Activated T-helper 1 cell treated with anti-CD3 and anti-CD28 coated beads, Interleukin-12 subunit alpha, Interleukin-12 subunit beta, Interleukin-2, Interleukin-4 antibody, amounts not matched to agents 30 ng/mL and 10 ng/mL and 1 ng/mL, durations not matched to agents 14 hours and 24 hours and 36 hours (primary cell): ENCODE measurements at regions of chr11 and their contacts with region 1.

Region 1: GRCh38 chr11:63681321-63682049 is at the start of gene RTN3:
- DNase-seq: peak; percentile 100
- H3K4me3 Mint-ChIP-seq: peak within 1 kb of the TSS; percentile 91
- H3K27ac Mint-ChIP-seq: peak within 1 kb of the TSS; percentile 91
- H3K4me1 Mint-ChIP-seq: peaks cover 32% of the 10 kb centered on the region
- H3K27me3 Mint-ChIP-seq: peaks cover 11% of the 10 kb centered on the region
- total RNA-seq, gene RTN3: 52.1 and 54.7 TPM in 2 replicates

Region 2: DNA sequence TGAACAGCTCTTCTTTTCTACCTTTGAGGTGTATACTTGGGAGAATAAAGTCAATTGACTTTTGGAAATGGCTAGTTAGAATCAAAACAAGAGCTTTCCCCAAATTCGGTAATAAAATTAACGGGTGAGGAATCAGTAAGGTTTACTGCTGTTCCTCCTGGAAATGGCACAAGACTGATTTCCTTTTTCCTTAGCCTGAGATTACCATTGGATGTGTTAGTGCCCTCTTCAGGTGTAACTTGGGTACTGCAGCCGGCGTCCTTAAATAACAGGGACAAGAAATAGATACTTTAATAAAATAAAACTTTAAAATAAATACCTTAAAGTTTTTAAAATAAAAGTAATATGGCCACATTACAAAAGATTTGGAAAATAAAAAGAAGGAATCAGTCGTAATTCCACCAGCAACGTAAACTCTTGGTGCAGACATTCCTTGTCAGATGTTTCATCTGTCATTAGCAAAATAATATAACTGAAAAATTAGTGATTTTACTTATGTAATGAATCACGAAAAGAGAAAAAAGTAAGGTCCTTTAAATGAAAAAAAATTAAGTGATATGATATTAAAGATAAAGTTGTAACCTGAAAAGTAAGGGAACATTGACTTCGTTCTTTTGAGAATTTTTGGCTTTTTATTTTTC is 57.4 kb after region 1 on chr11:
- intact Hi-C with region 1: loop called (anchors 1 kb)
- DNase-seq: peak; percentile 26
- H3K4me3 Mint-ChIP-seq: no peak overlapping the region
- H3K27ac Mint-ChIP-seq: no peak overlapping the region
- H3K4me1 Mint-ChIP-seq: peaks cover 5% of the 10 kb centered on the region
- H3K27me3 Mint-ChIP-seq: no peaks in the 10 kb centered on the region

Region 3: GRCh38 chr11:63768237-63769043 is 87.0 kb after region 1 on chr11 and contains the start of gene ZFTA:
- intact Hi-C with region 1: loop called (anchors 1 kb)
- DNase-seq: peak; percentile 45
- H3K4me3 Mint-ChIP-seq: peak within 1 kb of the TSS; percentile 87
- H3K27ac Mint-ChIP-seq: peak within 1 kb of the TSS; percentile 35
- H3K4me1 Mint-ChIP-seq: peaks cover 14% of the 10 kb centered on the region
- H3K27me3 Mint-ChIP-seq: peaks cover 33% of the 10 kb centered on the region
- total RNA-seq, gene ZFTA: 3.8 and 5.3 TPM in 2 replicates

Region 4: DNA sequence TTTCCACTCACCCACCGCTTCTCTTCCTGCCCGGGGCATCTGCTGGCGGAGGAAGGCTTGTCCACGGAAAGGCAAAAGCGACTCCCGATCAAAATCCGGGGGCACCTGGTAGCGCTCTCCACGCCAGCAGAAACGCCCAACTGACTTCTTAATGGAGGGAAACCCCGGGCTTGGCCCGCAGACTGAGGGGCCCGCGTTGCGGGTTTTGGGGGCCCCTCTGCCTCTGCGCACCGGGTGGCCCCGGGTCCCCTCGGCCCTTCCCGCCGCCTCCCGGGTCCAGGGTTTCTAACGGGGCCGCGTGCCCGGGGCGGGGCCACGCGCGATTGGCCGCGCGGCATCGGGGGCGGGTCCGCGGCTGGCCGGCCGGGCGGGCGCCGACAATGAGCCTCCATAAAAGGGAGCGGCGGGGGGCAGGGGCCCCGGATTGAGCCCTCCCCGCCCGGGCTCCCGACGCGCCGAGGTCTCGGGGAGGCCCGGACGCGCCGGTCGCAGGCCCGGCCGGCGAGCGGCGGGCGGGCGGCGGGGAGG is 131.6 kb after region 1 on chr11 and contains the start of gene SPINDOC:
- intact Hi-C with region 1: loop called (anchors 2 kb)
- DNase-seq: peak; percentile 78
- H3K4me3 Mint-ChIP-seq: peak within 1 kb of the TSS; percentile 88
- H3K27ac Mint-ChIP-seq: peak within 1 kb of the TSS; percentile 55
- H3K4me1 Mint-ChIP-seq: peaks cover 34% of the 10 kb centered on the region
- H3K27me3 Mint-ChIP-seq: no peaks in the 10 kb centered on the region
- total RNA-seq, gene SPINDOC: 60.0 and 64.3 TPM in 2 replicates

Region 5: DNA sequence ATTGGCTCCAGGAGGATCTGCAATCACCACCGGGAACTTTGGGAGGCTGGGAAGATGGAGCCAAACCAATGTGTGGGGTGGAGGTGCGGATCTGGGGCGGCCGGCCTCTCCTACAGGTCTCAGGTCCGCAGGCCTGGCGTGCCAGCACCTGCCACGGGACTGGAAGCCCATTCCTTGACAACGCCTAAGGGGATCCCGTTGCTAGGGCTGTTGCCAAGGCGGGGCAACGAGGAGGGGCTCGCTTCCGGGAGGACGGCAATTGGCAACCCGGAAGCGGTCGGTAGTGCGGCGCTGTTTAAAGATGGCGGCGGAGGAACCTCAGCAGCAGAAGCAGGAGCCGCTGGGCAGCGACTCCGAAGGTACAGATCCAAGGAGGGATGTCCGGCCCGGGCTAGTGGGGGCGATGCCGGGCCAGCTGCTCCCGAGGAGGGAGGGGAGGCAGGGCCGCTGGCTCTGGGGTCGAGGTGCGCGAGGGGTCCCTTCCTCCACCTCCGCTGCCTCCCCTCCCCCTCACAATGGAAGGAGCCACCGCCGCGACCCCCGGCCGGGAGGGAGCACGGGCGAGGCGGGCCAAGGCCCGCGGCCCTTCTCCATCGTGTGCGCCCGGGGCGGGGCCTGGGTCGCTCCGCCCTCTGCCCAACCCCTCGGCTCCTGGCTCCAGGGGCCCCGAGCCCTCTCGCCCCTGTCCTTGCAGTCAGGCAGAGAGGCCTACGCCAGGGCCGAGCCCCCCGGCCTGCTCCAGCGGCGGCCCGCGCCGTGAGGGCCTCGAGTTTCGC is 304.9 kb after region 1 on chr11 and contains the start of gene OTUB1:
- intact Hi-C with region 1: loop called (anchors 5 kb)
- DNase-seq: peak; percentile 86
- H3K4me3 Mint-ChIP-seq: peak within 1 kb of the TSS; percentile 97
- H3K27ac Mint-ChIP-seq: peak within 1 kb of the TSS; percentile 96
- H3K4me1 Mint-ChIP-seq: peaks cover 32% of the 10 kb centered on the region
- H3K27me3 Mint-ChIP-seq: no peaks in the 10 kb centered on the region
- total RNA-seq, gene OTUB1: 104 and 114 TPM in 2 replicates

Region 6: DNA sequence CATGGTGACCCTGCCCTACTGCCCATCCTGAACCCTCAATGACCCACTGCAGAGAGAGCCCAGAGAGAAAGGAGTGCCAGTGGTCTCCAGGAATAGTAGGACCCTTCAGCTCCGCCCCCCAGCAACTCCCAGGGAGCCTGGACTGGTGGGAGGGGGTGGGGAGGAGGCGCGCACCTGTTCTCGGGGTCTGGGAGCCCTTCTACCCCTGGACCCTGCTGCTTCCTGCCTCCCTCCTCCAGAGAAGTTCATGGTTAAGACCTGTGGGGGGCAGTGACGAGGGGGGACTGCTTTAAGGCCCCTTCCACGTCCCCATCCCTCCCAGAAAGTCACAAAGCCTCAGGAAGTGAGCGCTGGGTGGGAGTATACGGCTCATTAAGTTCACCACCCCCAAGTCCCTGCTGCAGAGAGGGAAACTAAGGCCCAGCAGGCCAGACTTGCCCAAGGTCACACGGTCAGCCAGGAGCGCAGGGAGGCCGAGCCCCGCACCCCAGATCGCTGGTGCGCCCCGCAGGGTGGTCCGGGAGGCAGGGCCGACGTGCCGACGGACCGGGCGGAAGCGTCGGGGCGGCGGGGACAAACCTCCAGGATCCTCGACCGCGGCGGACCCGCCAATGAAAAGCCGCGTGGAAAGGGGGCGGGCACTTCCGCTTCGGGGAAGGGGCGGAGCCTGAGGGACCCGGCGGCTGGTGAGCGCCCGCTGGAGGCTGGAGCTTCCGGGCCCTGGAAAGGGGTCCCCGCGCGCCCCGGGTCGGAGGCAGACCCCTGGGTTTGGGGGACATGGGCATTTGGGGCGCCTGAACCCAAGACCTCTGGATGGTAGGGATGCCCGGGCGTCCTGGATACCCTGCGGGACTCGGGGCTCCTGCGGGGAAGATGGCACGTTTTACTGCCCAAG is 544.4 kb after region 1 on chr11 and contains the starts of genes NUDT22 and TRPT1:
- intact Hi-C with region 1: no loop called
- DNase-seq: peak; percentile 92
- H3K4me3 Mint-ChIP-seq: peak within 1 kb of the TSS; percentile 87
- H3K27ac Mint-ChIP-seq: peak within 1 kb of the TSS; percentile 80
- H3K4me1 Mint-ChIP-seq: peaks cover 27% of the 10 kb centered on the region
- H3K27me3 Mint-ChIP-seq: no peaks in the 10 kb centered on the region
- total RNA-seq, gene NUDT22: 74.9 and 79.4 TPM in 2 replicates
- total RNA-seq, gene TRPT1: 30.3 and 35.5 TPM in 2 replicates